PC-3 (cell line): ENCODE measurements at regions of chr9 and their contacts with region 1.

Region 1: GRCh38 chr9:68560071-68560844 is 19.6 kb upstream of the TMEM252 start:
- DNase-seq: peak; percentile 36
- ATAC-seq: no peak
- H3K4me3 ChIP-seq: no peak overlapping the region
- H3K27ac ChIP-seq: no peak overlapping the region
- H3K4me1 ChIP-seq: no peaks in the 10 kb centered on the region; the same call in 1 of the 2 replicates
- H3K27me3 ChIP-seq: no peaks in the 10 kb centered on the region
- CTCF ChIP-seq: peak; percentile 51

Region 2: DNA sequence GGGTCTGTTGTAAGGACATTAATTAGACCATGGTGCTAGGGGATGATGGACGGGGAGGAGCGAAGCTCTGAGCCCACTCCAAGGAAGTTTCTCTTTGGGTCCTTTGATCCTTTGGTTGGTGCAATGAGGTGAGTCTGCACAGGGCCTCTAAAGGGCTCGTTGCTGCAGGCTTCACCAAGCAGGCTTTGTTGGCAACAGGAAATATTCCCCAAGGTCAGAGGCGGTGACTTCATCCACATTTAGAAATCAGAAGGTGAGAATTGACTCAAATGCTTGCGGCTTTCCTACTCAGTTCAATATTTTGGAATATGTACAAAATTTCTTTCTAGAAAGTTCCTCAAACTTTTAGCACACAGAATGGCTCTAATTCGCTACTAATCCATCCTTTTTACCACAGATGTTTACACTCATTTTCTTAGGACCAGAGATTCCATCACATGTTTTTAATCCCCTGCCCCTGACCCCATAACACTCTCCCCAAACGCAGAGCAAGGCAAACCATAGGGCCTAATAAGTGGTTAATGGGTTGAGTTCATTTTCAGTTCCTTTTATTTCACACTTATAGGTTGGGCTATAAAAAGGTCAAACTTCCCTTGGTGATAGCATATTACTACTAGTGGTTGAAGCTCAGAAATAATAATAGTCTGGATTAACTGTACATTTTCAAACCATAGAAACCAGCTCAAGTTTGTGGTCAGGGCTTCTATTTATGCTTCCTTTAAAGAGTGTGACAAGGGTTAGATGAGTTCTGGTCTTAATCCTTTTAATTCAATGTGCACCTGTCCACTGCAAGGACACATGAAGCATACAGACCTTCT is 17.7 kb after region 1 on chr9:
- CTCF ChIA-PET with region 1: interaction called, 16 read pairs
- POLR2A ChIA-PET with region 1: no interaction called
- intact Hi-C with region 1: no loop called
- DNase-seq: no peak
- ATAC-seq: no peak
- H3K4me3 ChIP-seq: no peak overlapping the region
- H3K27ac ChIP-seq: no peak overlapping the region
- H3K4me1 ChIP-seq: no peaks in the 10 kb centered on the region
- H3K27me3 ChIP-seq: no peaks in the 10 kb centered on the region
- CTCF ChIP-seq: no peak

Region 3: DNA sequence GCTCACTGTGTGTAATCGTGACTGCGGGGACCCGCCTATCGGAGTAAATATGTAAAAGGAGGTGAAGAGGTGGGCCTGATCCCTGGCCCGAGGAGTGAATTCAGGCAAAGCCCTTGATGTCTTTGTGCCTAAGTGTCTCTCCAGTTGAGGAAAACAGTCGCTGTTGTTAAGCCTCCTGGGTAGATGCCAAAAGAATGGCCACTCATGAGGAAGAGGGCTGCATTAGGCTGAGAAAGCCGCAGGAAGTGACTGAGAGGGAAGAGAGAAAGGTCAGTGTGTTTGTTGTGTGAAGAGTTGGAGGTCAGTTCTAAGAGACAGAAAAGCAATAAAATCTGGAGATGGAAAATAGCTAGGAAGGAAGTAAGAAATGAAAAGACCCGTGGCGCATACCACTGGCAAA is 109.0 kb after region 1 on chr9:
- CTCF ChIA-PET with region 1: no interaction called
- POLR2A ChIA-PET with region 1: no interaction called
- intact Hi-C with region 1: no loop called
- DNase-seq: no peak
- ATAC-seq: no peak
- H3K4me3 ChIP-seq: no peak overlapping the region
- H3K27ac ChIP-seq: no peak overlapping the region
- H3K4me1 ChIP-seq: no peaks in the 10 kb centered on the region
- H3K27me3 ChIP-seq: peaks cover 36% of the 10 kb centered on the region
- CTCF ChIP-seq: no peak

Region 4: DNA sequence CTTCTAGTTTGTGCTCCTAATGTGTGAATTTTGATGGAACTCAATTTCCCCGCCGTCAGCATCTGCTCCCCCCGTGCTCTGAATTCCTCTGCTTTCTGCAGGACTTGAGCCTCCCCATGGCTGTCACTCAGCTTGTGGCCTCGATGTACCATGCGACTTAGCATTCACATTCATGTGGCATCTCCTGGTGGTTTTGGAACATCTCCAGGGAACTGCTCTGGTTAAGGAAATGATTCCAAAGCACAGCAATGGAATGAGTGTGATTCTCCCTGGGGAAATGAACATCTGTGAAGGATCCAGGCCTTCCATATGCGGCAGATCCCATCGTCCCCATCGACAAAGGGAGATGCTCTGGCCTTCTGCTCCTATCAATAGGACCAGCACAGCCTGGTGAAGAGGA is 883.8 kb after region 1 on chr9:
- CTCF ChIA-PET with region 1: no interaction called
- POLR2A ChIA-PET with region 1: no interaction called
- intact Hi-C with region 1: no loop called
- DNase-seq: no peak
- ATAC-seq: no peak
- H3K4me3 ChIP-seq: no peak overlapping the region
- H3K27ac ChIP-seq: no peak overlapping the region
- H3K4me1 ChIP-seq: no peaks in the 10 kb centered on the region
- H3K27me3 ChIP-seq: peaks cover 10% of the 10 kb centered on the region; the same call in 1 of the 2 replicates
- CTCF ChIP-seq: no peak